ENCODE measurements at regions of chr1 and their contacts with region 1.

Region 1: DNA sequence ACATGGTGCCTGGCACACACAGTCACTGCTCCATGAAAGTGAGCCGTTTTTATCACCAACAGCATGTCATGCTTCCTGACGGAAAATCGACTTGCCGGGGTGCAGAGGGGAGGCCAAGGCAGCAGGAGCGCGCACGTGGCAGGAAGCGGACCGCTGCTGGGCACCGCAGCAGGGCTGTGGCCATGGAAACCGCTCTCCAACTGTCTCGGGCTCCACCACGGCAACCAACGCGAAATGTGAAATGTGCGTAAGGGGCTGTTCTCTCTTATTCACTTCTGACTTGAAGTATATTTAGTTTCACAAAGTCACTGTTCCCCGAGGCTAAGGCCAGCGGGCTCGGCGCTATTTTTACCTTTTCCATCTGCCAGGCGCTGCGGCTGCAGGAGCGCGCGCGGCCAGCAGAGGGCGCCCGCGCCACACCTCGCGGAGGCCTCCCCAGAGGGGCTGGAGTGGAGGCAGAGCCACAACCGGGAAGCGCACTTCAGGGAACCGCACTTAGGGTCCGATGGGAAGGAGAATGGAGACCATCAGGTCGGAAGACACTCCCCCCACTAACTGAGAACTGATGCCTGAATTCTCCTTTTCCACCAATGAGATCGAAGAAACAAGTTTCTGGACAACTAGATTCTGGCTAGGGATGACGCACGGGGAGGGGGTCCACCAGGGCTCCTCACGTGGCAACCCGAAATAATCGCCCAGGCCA is 19.7 kb downstream of the RCC2 start:
- DNase-seq: peak; percentile 91
- H3K4me3 Mint-ChIP-seq: no peak overlapping the region
- H3K27ac Mint-ChIP-seq: no peak overlapping the region
- H3K4me1 Mint-ChIP-seq: peaks cover 9% of the 10 kb centered on the region
- H3K27me3 Mint-ChIP-seq: no peaks in the 10 kb centered on the region

Region 2: GRCh38 chr1:15937706-15938168 is 1482.0 kb before region 1 on chr1:
- intact Hi-C with region 1: no loop called
- DNase-seq: no peak
- H3K4me3 Mint-ChIP-seq: no peak overlapping the region
- H3K27ac Mint-ChIP-seq: peak overlapping the region; percentile 76
- H3K4me1 Mint-ChIP-seq: peaks cover 13% of the 10 kb centered on the region
- H3K27me3 Mint-ChIP-seq: no peaks in the 10 kb centered on the region

Region 3: GRCh38 chr1:17437580-17438317 is 18.0 kb after region 1 on chr1:
- intact Hi-C with region 1: loop called (anchors 2 kb)
- DNase-seq: peak; percentile 84
- H3K4me3 Mint-ChIP-seq: peak overlapping the region; percentile 81
- H3K27ac Mint-ChIP-seq: peak overlapping the region; percentile 62
- H3K4me1 Mint-ChIP-seq: peaks cover 48% of the 10 kb centered on the region
- H3K27me3 Mint-ChIP-seq: no peaks in the 10 kb centered on the region

Region 4: DNA sequence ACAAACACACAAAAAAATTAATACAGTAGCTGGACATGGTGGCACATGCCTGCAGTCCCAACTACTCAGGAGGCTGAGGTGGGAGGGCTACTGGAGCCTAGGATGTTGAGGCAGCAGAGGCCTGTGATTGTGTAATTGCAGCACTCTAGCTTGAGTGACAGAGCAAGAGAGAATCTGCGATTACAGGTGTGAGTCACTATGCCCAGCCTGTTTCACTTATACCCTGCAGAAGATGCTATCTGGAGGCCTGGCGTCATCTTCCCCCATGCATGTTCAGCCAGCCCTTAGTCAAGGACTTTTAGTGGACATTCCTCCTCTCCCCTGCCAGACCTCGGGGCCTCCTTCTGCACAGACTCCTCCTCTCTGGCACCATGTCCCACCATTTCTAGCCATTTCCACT is 56.0 kb after region 1 on chr1:
- intact Hi-C with region 1: loop called (anchors 10 kb)
- DNase-seq: no peak
- H3K4me3 Mint-ChIP-seq: no peak overlapping the region
- H3K27ac Mint-ChIP-seq: no peak overlapping the region
- H3K4me1 Mint-ChIP-seq: no peaks in the 10 kb centered on the region
- H3K27me3 Mint-ChIP-seq: peaks cover 2% of the 10 kb centered on the region

Region 5: GRCh38 chr1:17648457-17649145 is 228.8 kb after region 1 on chr1:
- intact Hi-C with region 1: no loop called
- DNase-seq: no peak
- H3K4me3 Mint-ChIP-seq: no peak overlapping the region
- H3K27ac Mint-ChIP-seq: no peak overlapping the region
- H3K4me1 Mint-ChIP-seq: no peaks in the 10 kb centered on the region
- H3K27me3 Mint-ChIP-seq: no peaks in the 10 kb centered on the region

Measured in activated CD4-positive, alpha-beta T cell treated with anti-CD3 and anti-CD28 coated beads, Interleukin-2, amount 10 ng/mL, durations not matched to agents 24 days and 14 days (primary cell).